Body of pancreas (tissue), 4 donors: ENCODE measurements at regions of chr16 and their contacts with region 1.

Region 1: DNA sequence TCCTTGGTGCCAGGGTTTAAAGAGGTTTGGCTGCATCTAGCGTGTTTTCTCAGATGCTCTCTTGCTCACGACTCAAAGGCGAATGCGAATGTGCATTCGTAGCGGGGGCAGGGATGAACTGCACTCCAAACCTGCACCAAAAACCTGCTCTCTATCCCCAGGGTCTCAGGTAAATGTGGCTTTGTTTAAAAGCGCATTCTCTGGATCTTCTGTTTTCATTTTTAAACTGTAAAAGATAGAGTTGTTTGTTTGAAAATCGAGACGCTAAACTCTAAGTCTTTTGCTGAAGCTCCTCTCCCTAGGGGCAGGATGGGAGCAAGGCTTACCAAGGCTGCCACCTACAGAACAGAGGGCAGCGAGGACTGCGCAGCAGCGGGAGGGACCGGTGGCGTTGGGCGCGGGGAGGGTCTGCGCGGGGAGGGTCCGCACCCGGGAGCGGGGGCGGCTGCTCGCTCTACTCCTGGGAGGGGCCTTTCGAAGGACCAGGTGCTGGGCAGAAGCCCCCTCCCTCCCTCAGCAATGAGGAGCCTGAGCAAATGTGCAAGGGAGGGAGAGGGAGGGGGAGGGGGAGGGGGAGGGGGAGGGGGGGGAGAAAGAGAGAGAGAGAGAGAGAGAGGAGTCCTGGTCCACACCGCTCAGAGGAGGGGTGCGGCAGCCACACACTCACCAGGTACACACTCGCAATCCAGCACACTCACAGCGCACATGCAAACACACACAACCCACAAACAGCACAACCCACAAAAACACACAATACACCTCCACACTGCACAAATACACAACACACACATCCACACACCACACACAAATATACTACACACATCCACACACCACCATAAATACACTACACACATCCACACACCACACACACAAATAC is 142.8 kb downstream of the GRIN2A start:
- DNase-seq: peak in 3 of 4 donors; percentile 6 to 22 (median 16)
- ATAC-seq: peak; percentile 50
- H3K4me3 ChIP-seq: no peak overlapping the region
- H3K27ac ChIP-seq: no peak overlapping the region
- H3K4me1 ChIP-seq: peaks cover 7% of the 10 kb centered on the region
- H3K27me3 ChIP-seq: peaks cover 0 to 5% of the 10 kb centered on the region in 2 donors
- CTCF ChIP-seq: peak in 3 of 7 experiments; percentile 2 to 16 (median 10)
- POLR2A ChIP-seq: no peak

Region 2: GRCh38 chr16:10122546-10122945 is 83.1 kb after region 1 on chr16:
- intact Hi-C with region 1: no loop called
- DNase-seq: peak in 2 of 4 donors; percentile 16 to 40
- ATAC-seq: no peak
- H3K4me3 ChIP-seq: no peak overlapping the region
- H3K27ac ChIP-seq: no peak overlapping the region
- H3K4me1 ChIP-seq: peaks cover 7% of the 10 kb centered on the region
- H3K27me3 ChIP-seq: no peaks in the 10 kb centered on the region
- CTCF ChIP-seq: peak in 6 of 7 experiments; percentile 14 to 44 (median 37)
- POLR2A ChIP-seq: no peak

Region 3: GRCh38 chr16:10485698-10486382 is 446.4 kb after region 1 on chr16:
- intact Hi-C with region 1: no loop called
- DNase-seq: no peak
- ATAC-seq: no peak
- H3K4me3 ChIP-seq: no peak overlapping the region
- H3K27ac ChIP-seq: no peak overlapping the region
- H3K4me1 ChIP-seq: no peaks in the 10 kb centered on the region
- H3K27me3 ChIP-seq: no peaks in the 10 kb centered on the region
- CTCF ChIP-seq: no peak
- POLR2A ChIP-seq: no peak

Region 4: DNA sequence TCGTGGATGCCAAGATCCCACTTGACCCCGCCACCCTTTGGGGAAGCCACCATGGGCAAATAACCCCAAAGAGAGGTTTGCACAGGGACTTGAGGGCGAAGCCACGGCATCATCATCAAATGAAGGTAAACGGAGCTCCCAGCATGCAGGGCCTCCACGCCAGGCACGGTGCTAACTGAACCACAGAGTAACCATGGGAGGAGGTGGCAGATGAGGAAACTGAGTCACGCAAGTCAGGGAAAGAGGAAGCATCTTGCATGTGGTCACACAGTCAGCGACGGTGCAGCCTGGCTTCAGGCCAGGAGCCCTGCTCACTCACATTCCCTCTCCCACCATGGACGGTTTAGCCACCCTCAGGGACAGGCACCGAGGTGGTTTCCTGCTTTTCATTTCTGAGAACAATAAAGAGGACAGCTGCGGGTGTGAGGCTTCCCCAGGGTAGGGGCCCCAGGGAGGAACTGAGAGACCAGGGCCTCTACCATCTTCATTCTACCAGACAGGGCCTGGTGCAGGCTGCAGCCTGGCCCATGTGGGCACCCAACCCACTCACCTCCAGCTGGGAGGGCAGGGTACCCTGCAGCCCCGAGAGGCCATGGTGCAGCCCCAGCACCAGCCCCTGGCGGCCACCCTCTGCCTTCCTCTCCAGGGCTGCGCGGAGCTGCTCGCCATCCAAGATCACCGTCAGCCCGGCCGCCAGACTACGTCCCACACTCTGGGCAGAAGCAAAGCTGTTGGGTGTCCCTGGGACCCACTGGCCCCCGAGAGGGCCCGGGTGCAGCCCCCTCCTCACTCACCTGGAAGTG is 1384.1 kb after region 1 on chr16:
- intact Hi-C with region 1: loop called (anchors 10 kb)
- DNase-seq: no peak
- ATAC-seq: no peak
- H3K4me3 ChIP-seq: no peak overlapping the region
- H3K27ac ChIP-seq: no peak overlapping the region
- H3K4me1 ChIP-seq: no peaks in the 10 kb centered on the region
- H3K27me3 ChIP-seq: no peaks in the 10 kb centered on the region
- CTCF ChIP-seq: no peak
- POLR2A ChIP-seq: no peak